CD8-positive, alpha-beta T cell (primary cell): ENCODE measurements at regions of chr5 and their contacts with region 1.

Region 1: GRCh38 chr5:96536991-96537785 is 104.1 kb upstream of the PCSK1 start:
- DNase-seq: peak in 2 of 9 experiments; percentile 73 to 83
- ATAC-seq: peak; percentile 87
- H3K4me3 ChIP-seq: peak overlapping the region in 1 of 2 experiments; percentile 6
- H3K4me3 Mint-ChIP-seq: peak overlapping the region; percentile 46
- H3K27ac ChIP-seq: peak overlapping the region; percentile 10 to 55
- H3K27ac Mint-ChIP-seq: peak overlapping the region; percentile 81
- H3K4me1 ChIP-seq: peaks cover 24% of the 10 kb centered on the region
- H3K4me1 Mint-ChIP-seq: peaks cover 27% of the 10 kb centered on the region
- H3K27me3 ChIP-seq: no peaks in the 10 kb centered on the region
- H3K27me3 Mint-ChIP-seq: no peaks in the 10 kb centered on the region
- CTCF ChIP-seq: no peak

Region 2: GRCh38 chr5:95631991-95632675 is 905.1 kb before region 1 on chr5:
- CTCF ChIA-PET with region 1: no interaction called
- POLR2A ChIA-PET with region 1: no interaction called
- intact Hi-C with region 1: loop called in 1 of 2 experiments (anchors 5 kb)
- DNase-seq: peak; percentile 27 to 81 (median 64)
- ATAC-seq: peak; percentile 97
- H3K4me3 ChIP-seq: no peak overlapping the region
- H3K4me3 Mint-ChIP-seq: no peak overlapping the region
- H3K27ac ChIP-seq: peak overlapping the region; percentile 39 to 44
- H3K27ac Mint-ChIP-seq: peak overlapping the region; percentile 95
- H3K4me1 ChIP-seq: peaks cover 14% of the 10 kb centered on the region
- H3K4me1 Mint-ChIP-seq: peaks cover 15% of the 10 kb centered on the region
- H3K27me3 ChIP-seq: peaks cover 0 to 3% of the 10 kb centered on the region in 2 experiments
- H3K27me3 Mint-ChIP-seq: no peaks in the 10 kb centered on the region
- CTCF ChIP-seq: no peak

Region 3: DNA sequence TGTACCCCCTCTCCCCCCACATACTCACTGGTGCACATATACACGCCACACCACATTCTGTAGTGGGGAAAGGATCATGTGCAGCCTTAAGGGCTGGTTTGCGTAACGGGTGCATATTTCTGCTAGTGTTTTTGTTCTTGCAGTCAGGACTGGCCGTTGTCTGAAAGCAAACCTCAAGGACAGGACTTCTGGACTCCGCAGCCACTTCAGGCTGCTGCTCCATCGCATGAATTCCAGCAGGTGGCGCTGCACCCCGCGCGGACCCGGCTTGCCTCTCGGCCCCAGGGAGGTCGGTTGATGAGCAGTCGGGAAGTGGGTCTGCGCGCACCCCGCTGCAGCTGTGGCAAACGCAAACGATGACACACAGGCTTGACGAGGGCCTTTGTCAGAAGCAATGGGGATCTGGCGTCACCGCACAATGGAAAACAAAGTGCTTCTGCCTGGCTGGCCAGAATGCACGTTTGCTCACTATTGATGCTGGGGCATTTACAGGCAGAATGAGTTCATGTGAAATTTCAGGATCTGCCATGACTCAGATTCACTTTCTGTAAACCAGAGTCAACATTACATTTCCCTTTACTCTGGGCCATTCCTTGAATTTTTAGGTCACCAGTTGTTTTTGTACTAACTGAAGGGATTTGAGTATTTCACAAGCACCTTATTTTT is 678.4 kb before region 1 on chr5:
- CTCF ChIA-PET with region 1: no interaction called
- POLR2A ChIA-PET with region 1: no interaction called
- intact Hi-C with region 1: loop called in 1 of 2 experiments (anchors 10 kb)
- DNase-seq: peak; percentile 76 to 95 (median 92)
- ATAC-seq: peak; percentile 98
- H3K4me3 ChIP-seq: no peak overlapping the region
- H3K4me3 Mint-ChIP-seq: peak overlapping the region; percentile 47
- H3K27ac ChIP-seq: no peak overlapping the region
- H3K27ac Mint-ChIP-seq: peak overlapping the region; percentile 34
- H3K4me1 ChIP-seq: peaks cover 9% of the 10 kb centered on the region
- H3K4me1 Mint-ChIP-seq: peaks cover 25% of the 10 kb centered on the region
- H3K27me3 ChIP-seq: no peaks in the 10 kb centered on the region
- H3K27me3 Mint-ChIP-seq: peaks cover 10% of the 10 kb centered on the region
- CTCF ChIP-seq: peak; percentile 93

Region 4: DNA sequence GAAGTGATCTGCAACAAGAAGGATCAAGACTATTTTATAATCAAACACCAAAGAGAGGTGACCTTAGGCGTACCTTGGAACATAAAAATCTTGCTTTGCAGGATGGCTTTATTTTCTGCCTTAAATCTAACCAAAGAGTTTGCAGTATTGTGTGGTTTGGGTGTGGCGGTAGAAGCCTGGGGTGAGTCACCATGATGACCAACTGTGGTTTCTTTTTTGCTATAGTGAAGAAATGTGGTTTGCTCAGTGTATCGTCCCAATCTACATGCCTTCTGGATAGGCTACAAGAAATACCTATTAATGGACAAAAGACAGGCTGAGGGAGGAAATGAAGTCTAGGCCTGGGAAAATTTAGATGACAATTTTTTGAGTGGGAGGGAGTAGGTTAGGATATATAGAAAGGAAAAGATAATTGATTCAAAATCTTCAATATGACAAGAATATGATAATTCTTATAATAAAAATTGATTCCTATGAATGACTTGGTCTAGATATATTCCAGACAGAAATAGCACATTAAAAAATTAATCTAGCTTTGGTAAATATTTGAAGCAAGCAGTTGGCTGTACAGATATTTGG is 120.0 kb after region 1 on chr5:
- CTCF ChIA-PET with region 1: no interaction called
- POLR2A ChIA-PET with region 1: no interaction called
- intact Hi-C with region 1: loop called (anchors 2 to 5 kb)
- DNase-seq: peak in 7 of 9 experiments; percentile 20 to 79 (median 51)
- ATAC-seq: peak; percentile 9
- H3K4me3 ChIP-seq: no peak overlapping the region
- H3K4me3 Mint-ChIP-seq: no peak overlapping the region
- H3K27ac ChIP-seq: no peak overlapping the region
- H3K27ac Mint-ChIP-seq: no peak overlapping the region
- H3K4me1 ChIP-seq: peaks cover 17% of the 10 kb centered on the region
- H3K4me1 Mint-ChIP-seq: peaks cover 23% of the 10 kb centered on the region
- H3K27me3 ChIP-seq: no peaks in the 10 kb centered on the region
- H3K27me3 Mint-ChIP-seq: peaks cover 17% of the 10 kb centered on the region
- CTCF ChIP-seq: no peak

Region 5: DNA sequence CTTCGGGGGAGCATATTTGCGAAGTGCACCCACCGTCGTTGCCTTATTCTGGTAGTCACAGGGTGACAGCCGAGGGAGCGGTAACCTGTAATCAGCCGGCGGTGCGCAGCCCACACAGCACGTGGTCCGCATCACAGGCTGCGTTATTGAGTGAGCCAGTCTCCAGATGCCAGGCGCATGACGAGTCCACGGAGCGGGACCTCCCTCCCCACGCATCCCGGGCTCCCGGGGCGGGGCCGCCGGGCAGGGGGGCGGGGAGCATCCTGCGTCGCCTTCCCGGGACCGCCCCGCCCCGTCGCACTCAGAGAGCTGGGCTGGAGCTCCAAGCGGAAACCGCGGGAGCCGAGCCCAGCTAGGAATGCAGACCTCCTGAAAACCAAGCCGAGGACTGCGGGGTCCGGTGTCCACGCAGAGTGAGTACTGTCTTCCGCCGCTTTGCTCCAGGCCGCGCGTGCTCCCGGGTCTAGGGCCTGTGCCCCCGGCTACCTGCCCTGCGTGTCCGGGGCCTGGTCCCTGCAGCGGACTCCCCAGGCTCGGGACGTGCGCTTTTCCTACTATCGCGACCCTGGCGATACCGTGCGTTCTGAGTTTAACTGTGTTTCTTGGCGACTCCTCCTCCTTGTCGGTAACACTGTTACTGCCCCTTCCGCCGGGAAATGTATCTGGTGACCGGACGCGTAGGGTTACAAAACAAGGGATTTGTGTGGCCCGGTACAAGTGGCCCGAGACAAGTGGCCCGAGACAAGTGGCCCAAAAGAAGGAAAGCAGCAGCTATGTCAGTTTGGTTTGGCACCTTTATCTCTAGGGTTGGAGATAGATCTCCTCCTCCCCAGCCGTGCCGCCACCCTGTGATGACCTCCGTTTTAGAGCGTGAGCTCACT is 165.6 kb after region 1 on chr5:
- CTCF ChIA-PET with region 1: no interaction called
- POLR2A ChIA-PET with region 1: no interaction called
- intact Hi-C with region 1: loop called in 1 of 2 experiments (anchors 5 kb)
- DNase-seq: peak; percentile 49 to 91 (median 72)
- ATAC-seq: peak; percentile 82
- H3K4me3 ChIP-seq: peak overlapping the region; percentile 72 to 76
- H3K4me3 Mint-ChIP-seq: peak overlapping the region; percentile 82
- H3K27ac ChIP-seq: peak overlapping the region; percentile 73 to 82
- H3K27ac Mint-ChIP-seq: peak overlapping the region; percentile 94
- H3K4me1 ChIP-seq: peaks cover 7% of the 10 kb centered on the region
- H3K4me1 Mint-ChIP-seq: peaks cover 30% of the 10 kb centered on the region
- H3K27me3 ChIP-seq: no peaks in the 10 kb centered on the region
- H3K27me3 Mint-ChIP-seq: no peaks in the 10 kb centered on the region
- CTCF ChIP-seq: no peak